Common myeloid progenitor, CD34-positive (primary cell): ENCODE measurements at regions of chr11 and their contacts with region 1.

Region 1: GRCh38 chr11:66545701-66546367 is at the start of gene ZDHHC24:
- DNase-seq: peak; percentile 91 to 95 (median 95)
- H3K4me3 ChIP-seq: peak within 1 kb of the TSS; percentile 51 to 92 (median 78)
- H3K27ac ChIP-seq: peak within 1 kb of the TSS; percentile 54 to 88
- H3K4me1 ChIP-seq: peaks cover 13 to 40% (median 31%) of the 10 kb centered on the region in 4 experiments
- H3K27me3 ChIP-seq: peaks cover 0 to 9% (median 0%) of the 10 kb centered on the region in 5 experiments

Region 2: GRCh38 chr11:66677599-66678375 is 132.0 kb after region 1 on chr11 and contains the start of gene RBM4B:
- CTCF ChIA-PET with region 1: interaction called, 5 read pairs
- POLR2A ChIA-PET with region 1: interaction called, 11 read pairs
- DNase-seq: peak; percentile 97 to 99 (median 99)
- H3K4me3 ChIP-seq: peak within 1 kb of the TSS; percentile 64 to 94 (median 83)
- H3K27ac ChIP-seq: peak within 1 kb of the TSS; percentile 94 to 96
- H3K4me1 ChIP-seq: peaks cover 13 to 37% (median 30%) of the 10 kb centered on the region in 4 experiments
- H3K27me3 ChIP-seq: no peaks in the 10 kb centered on the region